ENCODE measurements at regions of chr4 and their contacts with region 1.

Region 1: DNA sequence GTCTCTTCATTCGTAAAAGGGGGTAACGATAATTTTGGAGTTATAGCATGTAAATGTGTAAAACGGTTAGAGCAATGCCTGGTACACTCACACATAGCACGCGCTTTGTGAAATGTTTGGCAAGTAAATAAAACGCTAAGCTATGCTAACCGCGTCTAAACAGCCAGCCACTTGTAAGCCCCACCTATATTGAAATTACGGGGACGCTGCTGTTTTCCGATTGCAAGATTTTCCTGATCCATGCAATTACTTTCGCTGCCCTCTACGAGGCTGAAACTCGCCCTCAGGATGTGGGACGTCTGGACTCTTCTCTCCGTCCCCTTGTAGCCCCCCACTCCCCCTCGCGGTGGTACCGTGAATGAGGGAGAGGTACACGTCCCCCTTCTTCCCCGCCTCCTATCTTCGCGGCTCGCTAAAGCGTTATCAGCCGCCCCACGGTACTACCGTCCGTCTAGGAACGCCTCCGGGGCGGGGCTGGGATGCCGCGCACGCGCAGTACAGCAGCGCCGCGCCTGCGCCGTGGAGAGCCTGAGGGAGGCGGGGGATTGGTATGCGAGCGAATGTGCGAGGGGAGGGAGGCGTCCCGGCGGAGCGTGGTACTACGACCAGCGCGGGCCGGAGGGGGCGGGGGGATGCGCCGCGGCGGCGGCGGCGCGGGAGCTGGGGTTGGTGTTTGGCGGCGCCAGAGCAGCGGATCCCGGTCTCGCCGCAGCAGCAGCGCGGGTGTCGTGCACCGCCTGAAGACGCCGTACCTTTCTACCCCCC is at the start of gene STIM2:
- DNase-seq: peak; percentile 95 to 98
- ATAC-seq: peak; percentile 91 to 97 (median 94)
- H3K4me3 ChIP-seq: peak within 1 kb of the TSS; percentile 72 to 93 (median 82)
- H3K27ac ChIP-seq: peak within 1 kb of the TSS; percentile 86 to 99 (median 94)
- H3K4me1 ChIP-seq: peaks cover 7 to 68% (median 55%) of the 10 kb centered on the region in 9 donors
- H3K27me3 ChIP-seq: no peaks in the 10 kb centered on the region
- CTCF ChIP-seq: peak in 7 of 9 donors; percentile 2 to 51 (median 40)
- total RNA-seq, gene STIM2: 6.5 to 13.5 (median 9.6) TPM

Region 2: DNA sequence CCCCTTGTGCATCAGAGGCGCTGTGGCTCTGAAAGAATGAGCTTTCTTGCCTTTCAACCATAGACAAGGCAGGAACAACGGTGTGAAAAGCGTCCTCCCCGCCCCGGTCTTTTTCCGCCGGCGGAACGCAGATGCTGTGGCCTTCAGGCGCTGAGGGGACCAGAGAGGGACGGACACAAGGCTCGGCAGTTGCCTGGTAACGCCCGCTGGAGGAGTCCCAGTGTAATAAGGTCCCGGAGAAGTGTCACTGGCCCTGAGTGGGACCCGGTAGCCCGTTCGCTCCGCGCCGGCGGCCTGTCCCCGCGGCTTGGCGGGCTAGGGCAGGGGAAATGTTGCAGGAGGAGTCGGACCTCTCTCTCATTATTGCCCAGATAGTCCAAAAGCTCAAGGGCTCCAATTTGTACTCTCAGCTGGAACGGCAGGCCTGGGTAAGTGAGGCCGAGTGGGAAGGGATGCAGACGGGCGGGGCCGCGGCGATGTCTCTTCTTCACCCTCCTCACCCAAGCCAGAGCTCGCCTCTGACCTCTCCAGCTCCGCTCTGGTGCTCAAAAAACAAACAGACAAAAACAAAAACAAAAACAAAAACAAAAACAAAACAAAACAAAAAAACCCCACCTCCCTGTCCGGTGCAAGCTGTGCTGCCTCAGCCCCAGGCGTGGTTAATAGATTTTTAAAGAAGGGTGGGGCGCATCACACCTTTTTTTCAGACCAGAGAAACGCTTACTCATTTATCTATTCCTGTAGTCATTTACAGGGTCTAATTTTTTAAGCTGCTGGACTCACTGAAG is 276.3 kb before region 1 on chr4 and contains the start of gene TBC1D19:
- intact Hi-C with region 1: loop called in 2 of 10 experiments (anchors 10 kb)
- DNase-seq: peak; percentile 86 to 87
- ATAC-seq: peak; percentile 99 to 100 (median 100)
- H3K4me3 ChIP-seq: peak within 1 kb of the TSS; percentile 40 to 89 (median 80)
- H3K27ac ChIP-seq: peak within 1 kb of the TSS in 9 of 10 donors; percentile 59 to 86 (median 76)
- H3K4me1 ChIP-seq: peaks cover 0 to 24% (median 15%) of the 10 kb centered on the region in 9 donors
- H3K27me3 ChIP-seq: no peaks in the 10 kb centered on the region
- CTCF ChIP-seq: no peak
- total RNA-seq, gene TBC1D19: 6.1 to 10.7 (median 9.7) TPM

Region 3: DNA sequence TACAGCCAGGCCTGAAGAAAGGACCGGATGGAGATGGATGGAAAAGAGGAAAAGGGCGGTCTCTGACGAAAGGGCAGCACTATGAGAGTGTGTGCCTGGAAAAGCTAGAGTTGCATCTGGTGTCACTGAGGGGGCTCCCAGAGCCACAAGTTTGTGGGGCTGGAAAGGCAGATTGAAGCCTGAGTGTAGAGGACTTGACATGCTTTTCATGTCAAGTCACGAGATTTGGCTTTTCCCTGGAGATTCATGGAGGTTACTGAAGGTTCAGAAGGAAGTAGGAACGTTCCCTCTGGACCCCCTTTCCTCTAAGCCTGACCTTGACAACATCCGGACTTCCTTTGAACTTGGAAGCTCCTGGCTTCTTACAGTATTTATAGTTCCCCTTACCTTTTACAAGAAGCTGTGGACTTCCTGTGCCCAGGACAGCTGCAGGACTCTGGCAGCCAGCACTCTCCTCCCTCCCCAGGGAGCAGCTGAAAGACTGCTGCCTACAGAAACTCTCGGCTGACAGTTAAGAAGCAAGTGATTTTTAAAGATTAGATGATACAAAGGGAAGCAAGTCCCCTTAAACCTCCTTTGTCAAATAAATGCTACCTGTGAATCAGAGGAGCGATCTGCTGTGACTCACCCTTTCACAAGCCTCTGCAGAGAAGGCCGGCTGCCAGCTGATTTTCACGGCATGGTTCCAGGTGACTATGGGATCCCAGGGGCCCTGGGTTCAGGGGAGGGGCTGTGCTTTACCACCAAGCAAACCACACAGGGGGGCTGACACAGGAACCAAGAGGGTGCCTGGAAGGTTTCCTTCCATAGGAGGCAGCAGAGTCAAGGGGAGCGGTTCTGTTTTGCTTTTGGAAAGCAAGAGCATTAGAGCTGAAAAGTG is 72.6 kb before region 1 on chr4:
- intact Hi-C with region 1: loop called in 1 of 10 experiments (anchors 2 kb)
- DNase-seq: peak; percentile 36 to 69
- ATAC-seq: peak; percentile 72 to 87 (median 80)
- H3K4me3 ChIP-seq: peak overlapping the region in 4 of 10 donors; percentile 1 to 18 (median 13)
- H3K27ac ChIP-seq: peak overlapping the region in 9 of 10 donors; percentile 23 to 68 (median 59)
- H3K4me1 ChIP-seq: peaks cover 2 to 39% (median 22%) of the 10 kb centered on the region in 9 donors
- H3K27me3 ChIP-seq: no peaks in the 10 kb centered on the region
- CTCF ChIP-seq: peak in 8 of 9 donors; percentile 31 to 71 (median 49)

Region 4: GRCh38 chr4:26899991-26900390 is 39.7 kb after region 1 on chr4:
- intact Hi-C with region 1: loop called in 2 of 10 experiments (anchors 5 kb)
- DNase-seq: no peak
- ATAC-seq: peak in 5 of 8 donors; percentile 25 to 62 (median 59)
- H3K4me3 ChIP-seq: no peak overlapping the region
- H3K27ac ChIP-seq: peak overlapping the region in 3 of 10 donors; percentile 4 to 61 (median 34)
- H3K4me1 ChIP-seq: peaks cover 0 to 45% (median 22%) of the 10 kb centered on the region in 9 donors
- H3K27me3 ChIP-seq: no peaks in the 10 kb centered on the region
- CTCF ChIP-seq: no peak

Region 5: DNA sequence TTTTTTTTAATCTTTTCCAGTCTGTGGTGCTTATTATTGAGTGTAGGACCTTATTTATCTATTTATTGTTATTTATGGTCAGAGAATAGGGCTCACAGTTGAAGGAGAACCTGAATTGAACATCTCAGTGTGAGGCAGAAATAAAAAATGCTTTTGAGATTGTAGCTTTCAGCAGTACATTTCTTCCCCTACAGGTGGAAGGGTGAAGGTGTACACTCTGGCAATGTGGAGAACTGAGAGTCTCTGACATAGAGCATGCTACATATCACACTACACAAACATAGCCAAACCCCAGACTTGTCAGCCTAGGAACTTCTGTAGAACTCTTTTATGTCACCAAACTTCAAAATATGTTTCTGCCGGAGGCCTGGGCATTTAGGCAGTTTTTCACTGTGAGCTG is 140.5 kb after region 1 on chr4:
- intact Hi-C with region 1: loop called in 5 of 10 experiments (anchors 5 to 10 kb)
- DNase-seq: no peak
- ATAC-seq: no peak
- H3K4me3 ChIP-seq: no peak overlapping the region
- H3K27ac ChIP-seq: no peak overlapping the region
- H3K4me1 ChIP-seq: peaks cover 0 to 9% (median 2%) of the 10 kb centered on the region in 9 donors
- H3K27me3 ChIP-seq: no peaks in the 10 kb centered on the region
- CTCF ChIP-seq: no peak